B cell (primary cell): ENCODE measurements at regions of chr12 and their contacts with region 1.

Region 1: GRCh38 chr12:120437754-120438494 is at the start of gene COX6A1:
- DNase-seq: peak; percentile 98
- ATAC-seq: peak; percentile 96
- H3K4me3 ChIP-seq: peak within 1 kb of the TSS; percentile 73 to 86 (median 83)
- H3K4me3 Mint-ChIP-seq: peak within 1 kb of the TSS; percentile 91
- H3K27ac ChIP-seq: peak within 1 kb of the TSS; percentile 70 to 84
- H3K27ac Mint-ChIP-seq: peak within 1 kb of the TSS; percentile 96
- H3K4me1 ChIP-seq: peaks cover 18 to 20% of the 10 kb centered on the region in 2 donors
- H3K4me1 Mint-ChIP-seq: peaks cover 26% of the 10 kb centered on the region
- H3K27me3 ChIP-seq: peaks cover 0 to 5% (median 2%) of the 10 kb centered on the region in 4 experiments
- H3K27me3 Mint-ChIP-seq: peaks cover 8% of the 10 kb centered on the region
- CTCF ChIP-seq: peak; percentile 9
- total RNA-seq, gene COX6A1: 132 and 137 TPM in 2 replicates

Region 2: DNA sequence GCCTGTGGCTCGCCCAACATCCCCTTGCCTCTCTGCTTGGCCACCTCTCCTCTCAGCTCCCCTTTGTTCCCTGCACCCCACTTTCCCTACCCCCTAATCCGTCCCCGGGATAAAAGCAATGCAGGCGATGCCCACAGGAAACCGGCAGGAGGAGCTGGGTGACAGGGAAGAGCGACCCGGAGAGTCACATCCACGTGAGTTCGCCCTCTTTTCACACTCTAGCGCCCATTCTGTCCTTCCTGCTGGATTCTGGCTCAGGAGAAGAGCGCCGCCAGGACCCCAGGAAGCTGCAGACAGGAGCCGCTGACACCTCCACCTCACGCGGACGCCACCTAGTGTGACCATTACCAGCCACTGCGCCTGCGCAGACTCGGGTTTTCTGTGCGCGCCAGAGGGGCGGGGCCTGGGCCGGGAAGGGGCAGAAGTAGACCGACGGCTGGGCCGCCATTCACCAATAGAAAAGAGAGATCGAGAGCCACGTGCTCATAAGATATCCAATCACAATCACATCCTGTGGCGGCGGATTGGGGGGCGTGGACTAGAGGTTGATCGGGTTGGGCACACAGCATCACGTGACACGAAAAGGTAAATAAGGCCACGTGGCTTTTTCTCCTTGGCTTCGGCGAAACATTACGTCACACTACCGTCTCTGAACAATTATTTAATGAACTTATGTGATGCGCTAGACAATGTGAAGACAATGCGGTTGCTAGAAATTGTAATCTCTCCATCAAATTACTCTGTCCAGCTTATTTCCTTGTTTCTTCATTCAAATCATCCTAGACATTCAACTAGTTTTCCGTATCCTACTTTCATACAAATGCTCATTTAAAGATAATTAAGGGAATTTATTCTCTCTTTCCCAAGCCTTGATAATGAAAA is 120.5 kb before region 1 on chr12:
- CTCF ChIA-PET with region 1: interaction called, 3 read pairs
- POLR2A ChIA-PET with region 1: no interaction called
- intact Hi-C with region 1: loop called (anchors 5 kb)
- DNase-seq: peak; percentile 99
- ATAC-seq: peak; percentile 99
- H3K4me3 ChIP-seq: peak overlapping the region; percentile 55 to 78 (median 66)
- H3K4me3 Mint-ChIP-seq: peak overlapping the region; percentile 76
- H3K27ac ChIP-seq: peak overlapping the region; percentile 86 to 95
- H3K27ac Mint-ChIP-seq: peak overlapping the region; percentile 75
- H3K4me1 ChIP-seq: peaks cover 10 to 13% of the 10 kb centered on the region in 2 donors
- H3K4me1 Mint-ChIP-seq: peaks cover 14% of the 10 kb centered on the region
- H3K27me3 ChIP-seq: peaks cover 0 to 6% (median 0%) of the 10 kb centered on the region in 4 experiments
- H3K27me3 Mint-ChIP-seq: peaks cover 3% of the 10 kb centered on the region
- CTCF ChIP-seq: peak; percentile 50

Region 3: GRCh38 chr12:120534203-120534702 is 96.3 kb after region 1 on chr12 and contains the start of gene RNF10:
- CTCF ChIA-PET with region 1: no interaction called
- POLR2A ChIA-PET with region 1: interaction called, 7 read pairs
- intact Hi-C with region 1: loop called (anchors 2 kb)
- DNase-seq: peak; percentile 93
- ATAC-seq: peak; percentile 77
- H3K4me3 ChIP-seq: peak within 1 kb of the TSS; percentile 69 to 93 (median 80)
- H3K4me3 Mint-ChIP-seq: peak within 1 kb of the TSS; percentile 97
- H3K27ac ChIP-seq: peak within 1 kb of the TSS; percentile 64 to 94
- H3K27ac Mint-ChIP-seq: peak within 1 kb of the TSS; percentile 97
- H3K4me1 ChIP-seq: peaks cover 47 to 55% of the 10 kb centered on the region in 2 donors
- H3K4me1 Mint-ChIP-seq: peaks cover 57% of the 10 kb centered on the region
- H3K27me3 ChIP-seq: no peaks in the 10 kb centered on the region
- H3K27me3 Mint-ChIP-seq: no peaks in the 10 kb centered on the region
- CTCF ChIP-seq: no peak
- total RNA-seq, gene RNF10: 227 and 236 TPM in 2 replicates

Region 4: DNA sequence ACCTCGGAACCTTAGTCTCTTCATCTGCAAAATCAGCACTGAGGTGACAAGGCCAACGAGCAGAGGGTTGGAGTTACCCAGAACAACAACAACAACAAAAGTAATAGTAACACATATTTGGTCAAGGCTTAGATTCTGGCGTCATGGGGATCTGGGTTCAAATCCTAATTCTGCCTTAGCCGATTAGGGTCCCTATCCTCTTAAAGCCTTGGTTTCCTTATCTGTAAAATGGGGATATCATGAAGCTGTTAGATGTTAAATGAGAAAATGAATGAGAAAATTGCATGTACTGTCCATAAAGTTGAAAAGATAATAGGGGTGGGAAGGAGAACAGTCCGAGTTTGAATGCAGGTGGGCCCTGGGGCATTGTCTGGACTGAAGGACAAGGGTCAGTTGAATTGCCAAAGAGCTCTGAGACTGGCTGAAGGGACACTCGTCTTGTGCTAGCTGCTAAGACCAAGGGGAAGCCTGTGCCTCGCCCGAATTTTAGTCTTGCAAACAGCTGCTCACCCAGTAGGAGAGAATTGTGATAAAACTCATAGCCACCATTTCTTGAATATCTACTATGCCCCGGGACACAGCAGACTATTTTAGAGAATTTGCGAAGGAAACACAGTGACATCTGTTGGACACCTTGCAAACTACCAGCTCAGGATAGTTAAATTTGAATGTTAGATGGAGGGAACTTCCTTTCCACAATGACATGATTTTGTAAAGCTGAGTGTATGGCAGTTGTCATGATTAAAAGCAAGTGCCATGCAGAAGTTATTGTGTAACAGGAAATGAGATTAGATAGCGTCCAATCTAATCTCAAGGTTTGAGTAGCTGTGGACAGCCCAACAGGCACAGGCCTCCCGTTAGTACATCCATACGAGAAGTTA is 533.6 kb after region 1 on chr12:
- CTCF ChIA-PET with region 1: interaction called, 3 read pairs
- POLR2A ChIA-PET with region 1: no interaction called
- intact Hi-C with region 1: loop called (anchors 5 kb)
- DNase-seq: peak; percentile 78
- ATAC-seq: peak; percentile 88
- H3K4me3 ChIP-seq: no peak overlapping the region
- H3K4me3 Mint-ChIP-seq: no peak overlapping the region
- H3K27ac ChIP-seq: no peak overlapping the region
- H3K27ac Mint-ChIP-seq: peak overlapping the region; percentile 42
- H3K4me1 ChIP-seq: peaks cover 3 to 6% of the 10 kb centered on the region in 2 donors
- H3K4me1 Mint-ChIP-seq: peaks cover 6% of the 10 kb centered on the region
- H3K27me3 ChIP-seq: peaks cover 0 to 2% (median 0%) of the 10 kb centered on the region in 4 experiments
- H3K27me3 Mint-ChIP-seq: peaks cover 4% of the 10 kb centered on the region
- CTCF ChIP-seq: peak; percentile 80

Region 5: GRCh38 chr12:122265931-122266771 is 1828.2 kb after region 1 on chr12 and contains the start of gene VPS33A:
- CTCF ChIA-PET with region 1: no interaction called
- POLR2A ChIA-PET with region 1: no interaction called
- intact Hi-C with region 1: loop called (anchors 5 kb)
- DNase-seq: peak; percentile 96
- ATAC-seq: peak; percentile 82
- H3K4me3 ChIP-seq: peak within 1 kb of the TSS; percentile 70 to 96 (median 91)
- H3K4me3 Mint-ChIP-seq: peak within 1 kb of the TSS; percentile 99
- H3K27ac ChIP-seq: peak within 1 kb of the TSS; percentile 89 to 97
- H3K27ac Mint-ChIP-seq: peak within 1 kb of the TSS; percentile 100
- H3K4me1 ChIP-seq: peaks cover 9 to 14% of the 10 kb centered on the region in 2 donors
- H3K4me1 Mint-ChIP-seq: peaks cover 23% of the 10 kb centered on the region
- H3K27me3 ChIP-seq: no peaks in the 10 kb centered on the region
- H3K27me3 Mint-ChIP-seq: no peaks in the 10 kb centered on the region
- CTCF ChIP-seq: no peak
- total RNA-seq, gene VPS33A: 34.6 and 34.9 TPM in 2 replicates